Naive thymus-derived CD8-positive, alpha-beta T cell (primary cell): ENCODE measurements at regions of chr17 and their contacts with region 1.

Region 1: GRCh38 chr17:75012346-75013091 is at the start of gene MRPL58:
- DNase-seq: peak; percentile 62 to 88 (median 78)
- ATAC-seq: peak; percentile 92 to 94
- H3K4me3 Mint-ChIP-seq: peak within 1 kb of the TSS; percentile 89 to 97 (median 94)
- H3K27ac Mint-ChIP-seq: peak within 1 kb of the TSS; percentile 87 to 97 (median 94)
- H3K4me1 Mint-ChIP-seq: peaks cover 21 to 36% (median 32%) of the 10 kb centered on the region in 4 donors
- H3K27me3 Mint-ChIP-seq: no peaks in the 10 kb centered on the region
- polyA plus RNA-seq, gene MRPL58: 44.9 to 58.1 (median 53.6) TPM

Region 2: GRCh38 chr17:74972107-74972972 is 40.2 kb before region 1 on chr17 and contains the start of gene HID1:
- POLR2A ChIA-PET with region 1: interaction called, 16 read pairs
- DNase-seq: peak; percentile 60 to 92 (median 78)
- ATAC-seq: peak; percentile 86 to 90
- H3K4me3 Mint-ChIP-seq: peak within 1 kb of the TSS; percentile 77 to 95 (median 88)
- H3K27ac Mint-ChIP-seq: peak within 1 kb of the TSS; percentile 52 to 94 (median 81)
- H3K4me1 Mint-ChIP-seq: peaks cover 4 to 17% (median 14%) of the 10 kb centered on the region in 4 donors
- H3K27me3 Mint-ChIP-seq: peaks cover 0 to 15% (median 0%) of the 10 kb centered on the region in 5 donors
- polyA plus RNA-seq, gene HID1: 4.2 to 6.9 (median 4.7) TPM

Region 3: DNA sequence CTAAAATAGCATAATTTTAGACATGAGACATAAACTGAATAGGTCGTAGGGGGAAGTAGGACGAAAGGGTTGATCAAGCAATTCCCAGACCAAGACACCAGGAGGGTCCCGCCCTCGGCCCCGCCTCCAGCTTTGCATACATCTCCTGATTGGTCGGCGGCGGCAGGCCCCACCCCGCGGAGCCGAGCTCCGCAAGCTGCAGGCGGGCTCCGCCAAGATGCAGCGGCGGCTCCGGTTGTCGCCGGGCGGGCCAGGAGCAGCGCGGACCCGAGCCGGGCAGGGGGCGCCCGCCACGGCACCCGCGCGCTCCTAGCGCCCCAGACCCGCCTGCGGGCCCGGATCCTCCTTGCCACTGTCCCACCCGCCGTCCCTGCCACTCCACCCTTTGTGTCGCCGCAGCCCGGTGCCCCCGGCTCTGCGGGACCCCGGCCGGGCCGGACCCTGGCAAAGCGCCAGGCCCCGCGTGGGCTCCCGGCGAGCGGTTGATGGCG is 25.1 kb before region 1 on chr17 and contains the start of gene CDR2L:
- POLR2A ChIA-PET with region 1: interaction called, 35 read pairs
- DNase-seq: peak; percentile 83 to 94 (median 91)
- ATAC-seq: peak; percentile 95
- H3K4me3 Mint-ChIP-seq: peak within 1 kb of the TSS; percentile 79 to 92 (median 87)
- H3K27ac Mint-ChIP-seq: peak within 1 kb of the TSS in 7 of 10 donors; percentile 5 to 89 (median 49)
- H3K4me1 Mint-ChIP-seq: peaks cover 5 to 19% (median 9%) of the 10 kb centered on the region in 4 donors
- H3K27me3 Mint-ChIP-seq: peaks cover 0 to 5% (median 0%) of the 10 kb centered on the region in 5 donors
- polyA plus RNA-seq, gene CDR2L: not detected

Region 4: DNA sequence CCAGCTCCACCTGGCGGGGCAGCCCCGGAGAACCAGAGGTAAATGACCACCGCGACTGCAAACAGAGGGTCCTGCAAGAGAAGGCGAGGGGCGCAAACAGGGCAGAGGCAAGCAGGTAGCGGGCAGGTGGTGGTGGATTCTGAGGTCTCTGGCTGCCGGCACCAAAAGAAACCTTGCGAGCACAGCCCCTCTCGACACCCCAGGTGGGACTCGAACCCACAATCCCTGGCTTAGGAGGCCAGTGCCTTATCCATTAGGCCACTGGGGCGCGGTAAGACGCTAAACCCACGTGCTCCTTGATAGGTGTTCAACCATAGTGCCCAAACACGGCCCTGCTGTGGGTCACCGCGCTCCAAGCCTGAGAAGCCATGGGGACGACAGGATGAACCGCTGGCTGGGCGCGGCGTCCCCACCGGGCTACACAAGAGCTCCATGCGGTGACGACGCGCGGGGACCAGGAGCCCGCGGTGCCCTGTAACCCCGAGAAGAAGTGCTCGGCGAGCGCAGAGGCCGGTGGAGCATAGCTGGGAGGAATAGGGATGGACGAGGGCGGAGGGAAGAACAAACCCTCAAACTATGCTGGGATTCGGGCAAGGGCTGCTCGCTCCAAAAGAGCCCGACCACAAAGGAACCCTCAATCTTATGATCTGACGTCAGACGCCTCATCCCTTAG is 21.9 kb after region 1 on chr17:
- POLR2A ChIA-PET with region 1: interaction called, 76 read pairs
- DNase-seq: peak; percentile 52 to 89 (median 78)
- ATAC-seq: peak; percentile 24
- H3K4me3 Mint-ChIP-seq: peak overlapping the region; percentile 85 to 96 (median 89)
- H3K27ac Mint-ChIP-seq: peak overlapping the region; percentile 98 to 100 (median 100)
- H3K4me1 Mint-ChIP-seq: peaks cover 38 to 66% (median 56%) of the 10 kb centered on the region in 4 donors
- H3K27me3 Mint-ChIP-seq: peaks cover 0 to 11% (median 0%) of the 10 kb centered on the region in 5 donors

Region 5: DNA sequence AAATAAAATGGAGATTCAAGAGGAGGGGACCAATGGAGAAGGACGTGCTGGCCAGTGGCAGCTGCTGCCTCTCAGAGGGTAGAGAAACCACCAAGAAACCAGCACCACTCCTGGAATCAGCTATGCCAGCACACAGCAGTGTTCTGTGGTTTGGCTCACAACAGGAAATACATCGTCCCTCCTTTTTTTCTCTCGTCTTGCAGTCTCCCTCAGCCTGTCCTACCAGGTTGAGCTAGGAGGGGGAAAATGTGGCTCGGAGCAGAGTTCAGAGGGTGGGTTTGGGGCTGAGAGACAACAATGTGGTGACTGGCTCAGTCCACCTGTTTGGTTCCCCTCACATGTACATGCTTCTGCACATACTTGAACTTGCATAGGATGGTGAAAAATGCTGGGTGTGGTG is 55.3 kb after region 1 on chr17:
- POLR2A ChIA-PET with region 1: interaction called, 15 read pairs
- DNase-seq: peak in 3 of 10 donors; percentile 17 to 45 (median 44)
- ATAC-seq: peak; percentile 88 to 92
- H3K4me3 Mint-ChIP-seq: peak overlapping the region in 9 of 10 donors; percentile 16 to 79 (median 60)
- H3K27ac Mint-ChIP-seq: peak overlapping the region; percentile 38 to 91 (median 80)
- H3K4me1 Mint-ChIP-seq: peaks cover 10 to 27% (median 19%) of the 10 kb centered on the region in 4 donors
- H3K27me3 Mint-ChIP-seq: no peaks in the 10 kb centered on the region